A673 (cell line): ENCODE measurements at regions of chr10 and their contacts with region 1.

Region 1: GRCh38 chr10:77391605-77392235 is 245.9 kb downstream of the KCNMA1 start:
- DNase-seq: peak; percentile 86
- H3K4me3 ChIP-seq: no peak overlapping the region
- H3K27ac ChIP-seq: no peak overlapping the region
- H3K4me1 ChIP-seq: no peaks in the 10 kb centered on the region
- H3K27me3 ChIP-seq: peaks cover 7% of the 10 kb centered on the region
- CTCF ChIP-seq: peak; percentile 69

Region 2: DNA sequence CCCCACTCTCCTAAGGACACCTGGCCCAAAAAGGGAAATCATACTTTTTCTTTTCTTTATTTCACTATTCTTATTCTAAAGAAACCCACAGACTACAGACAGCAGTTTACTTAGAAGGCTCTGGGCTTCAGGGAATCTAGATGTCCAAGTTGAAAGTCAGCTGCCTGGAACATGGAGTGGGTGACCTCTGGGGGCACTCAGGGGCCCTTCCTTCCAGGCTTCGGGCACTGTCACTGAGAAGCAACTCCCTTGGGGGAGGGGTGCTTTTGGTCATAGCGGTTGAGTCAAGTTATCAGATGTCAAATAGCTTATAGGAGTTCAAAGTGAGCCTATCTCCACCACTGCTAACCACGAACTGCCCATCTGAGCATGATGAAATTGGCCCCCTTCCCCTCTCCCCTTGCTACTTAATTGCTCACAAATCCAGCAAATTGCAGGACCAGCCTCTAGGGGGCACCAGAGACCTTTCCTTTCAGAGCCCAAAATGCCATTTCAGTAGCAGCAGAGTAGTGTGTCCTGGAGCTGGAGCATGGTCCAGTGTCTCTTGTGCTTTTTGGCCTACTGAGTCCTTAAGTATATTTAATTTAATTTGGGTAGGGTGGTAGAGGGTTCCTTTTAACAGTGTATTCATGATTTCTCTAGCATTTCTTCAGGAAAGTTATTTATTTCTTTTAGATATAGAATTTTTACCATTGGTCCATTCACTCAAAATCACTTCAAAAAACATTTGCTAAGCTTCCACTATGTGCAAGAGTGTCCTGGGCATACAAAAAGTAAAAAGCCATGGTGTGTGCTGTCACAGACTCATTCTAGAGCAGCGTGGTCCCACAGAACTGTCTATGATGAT is 217.9 kb before region 1 on chr10:
- CTCF ChIA-PET with region 1: no interaction called
- POLR2A ChIA-PET with region 1: no interaction called
- intact Hi-C with region 1: loop called (anchors 10 kb)
- DNase-seq: peak; percentile 79
- H3K4me3 ChIP-seq: no peak overlapping the region
- H3K27ac ChIP-seq: no peak overlapping the region
- H3K4me1 ChIP-seq: no peaks in the 10 kb centered on the region
- H3K27me3 ChIP-seq: no peaks in the 10 kb centered on the region
- CTCF ChIP-seq: peak; percentile 91

Region 3: GRCh38 chr10:77247031-77247990 is 144.4 kb before region 1 on chr10:
- CTCF ChIA-PET with region 1: no interaction called
- POLR2A ChIA-PET with region 1: no interaction called
- intact Hi-C with region 1: no loop called
- DNase-seq: peak; percentile 60
- H3K4me3 ChIP-seq: no peak overlapping the region
- H3K27ac ChIP-seq: no peak overlapping the region
- H3K4me1 ChIP-seq: peaks cover 13% of the 10 kb centered on the region
- H3K27me3 ChIP-seq: no peaks in the 10 kb centered on the region
- CTCF ChIP-seq: no peak

Region 4: GRCh38 chr10:77667426-77668324 is 276.0 kb after region 1 on chr10:
- CTCF ChIA-PET with region 1: no interaction called
- POLR2A ChIA-PET with region 1: no interaction called
- intact Hi-C with region 1: no loop called
- DNase-seq: no peak
- H3K4me3 ChIP-seq: no peak overlapping the region
- H3K27ac ChIP-seq: no peak overlapping the region
- H3K4me1 ChIP-seq: no peaks in the 10 kb centered on the region
- H3K27me3 ChIP-seq: no peaks in the 10 kb centered on the region
- CTCF ChIP-seq: no peak